Activated B cell treated with CpG ODN at 0.5 μM for 24 hours (primary cell): ENCODE measurements at regions of chr18 and their contacts with region 1.

Region 1: DNA sequence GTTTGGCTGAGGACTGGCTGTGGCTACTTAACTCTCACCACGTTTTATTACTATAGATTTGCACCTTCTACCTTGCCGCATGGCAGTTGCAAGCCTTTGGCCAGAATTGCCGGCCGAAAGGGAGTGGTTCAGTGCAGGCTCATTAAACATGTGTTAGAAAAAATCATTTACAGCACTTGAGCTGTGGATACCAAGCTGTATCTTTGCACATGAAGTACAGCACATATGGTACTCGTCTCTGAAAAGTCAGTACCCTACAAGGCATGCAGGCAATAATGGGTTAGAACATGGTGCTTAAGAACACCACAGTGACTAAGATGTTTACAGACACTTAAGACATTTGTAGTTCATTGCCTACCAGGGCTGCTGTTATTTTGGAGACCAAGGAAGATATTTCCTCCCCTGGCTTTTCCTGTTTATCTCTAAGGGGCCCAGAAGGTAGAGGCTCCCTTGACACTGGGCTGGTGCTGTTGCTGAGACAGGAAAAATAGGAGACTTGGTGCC is 103.1 kb downstream of the ZNF532 start:
- DNase-seq: no peak
- ATAC-seq: no peak
- H3K4me3 Mint-ChIP-seq: peak overlapping the region; percentile 46
- H3K27ac Mint-ChIP-seq: peak overlapping the region; percentile 94
- H3K4me1 Mint-ChIP-seq: peaks cover 94% of the 10 kb centered on the region
- H3K27me3 Mint-ChIP-seq: no peaks in the 10 kb centered on the region
- CTCF ChIP-seq: no peak

Region 2: DNA sequence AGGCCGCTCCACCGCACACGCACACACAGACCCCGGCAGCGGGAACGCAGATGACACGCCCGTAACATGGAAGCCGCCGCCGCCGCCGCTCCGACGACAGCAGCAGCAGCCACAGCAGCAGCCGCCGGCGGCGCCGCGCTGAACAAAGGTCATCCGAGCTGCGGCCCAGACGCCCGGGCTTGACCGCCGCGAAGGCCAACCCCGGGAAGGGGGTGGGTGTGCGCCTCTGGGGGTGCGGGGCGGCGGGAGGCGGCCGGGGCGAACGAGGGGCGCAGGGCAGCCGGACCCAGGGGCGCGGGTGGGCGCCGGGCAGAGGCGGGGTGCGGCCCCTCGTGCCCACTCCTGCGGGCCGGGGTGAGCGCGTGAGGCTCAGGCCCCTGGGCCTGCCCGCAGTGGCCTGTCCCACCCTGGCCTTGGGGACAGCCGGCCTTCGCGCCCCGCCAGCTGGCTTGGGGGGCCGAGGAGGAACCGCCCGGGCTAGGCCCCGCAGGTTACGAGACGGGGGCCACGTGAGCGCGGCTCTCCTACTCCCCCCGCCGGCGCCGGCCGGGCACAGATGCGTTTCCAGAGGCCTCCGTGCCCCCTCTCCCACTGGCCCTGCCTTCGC is 104.2 kb before region 1 on chr18:
- CTCF ChIA-PET with region 1: no interaction called
- POLR2A ChIA-PET with region 1: interaction called, 6 read pairs
- intact Hi-C with region 1: loop called (anchors 2 kb)
- DNase-seq: peak; percentile 61
- ATAC-seq: peak; percentile 66
- H3K4me3 Mint-ChIP-seq: peak overlapping the region; percentile 76
- H3K27ac Mint-ChIP-seq: peak overlapping the region; percentile 85
- H3K4me1 Mint-ChIP-seq: peaks cover 32% of the 10 kb centered on the region
- H3K27me3 Mint-ChIP-seq: no peaks in the 10 kb centered on the region
- CTCF ChIP-seq: no peak

Region 3: DNA sequence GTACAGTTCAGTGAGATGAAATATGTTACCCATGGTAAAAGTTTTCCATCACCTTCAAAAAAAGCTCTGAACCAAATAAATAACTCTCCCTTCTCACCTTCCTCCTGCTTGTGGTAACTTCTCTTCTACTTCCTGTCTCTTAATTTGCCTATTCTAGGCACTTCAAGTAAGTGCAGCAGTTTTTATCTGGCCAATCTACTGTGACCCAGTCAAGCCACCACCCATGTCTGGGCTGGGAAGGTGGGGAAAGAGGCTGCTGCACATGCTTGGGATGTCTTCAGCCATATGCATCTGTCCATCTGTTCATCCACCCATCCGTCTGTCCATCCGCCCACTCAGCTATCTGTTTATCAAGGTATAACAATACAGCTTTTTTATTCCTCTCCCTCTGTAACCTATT is 71.5 kb before region 1 on chr18:
- CTCF ChIA-PET with region 1: no interaction called
- POLR2A ChIA-PET with region 1: interaction called, 13 read pairs
- intact Hi-C with region 1: loop called (anchors 1 kb)
- DNase-seq: no peak
- ATAC-seq: peak; percentile 92
- H3K4me3 Mint-ChIP-seq: peak overlapping the region; percentile 80
- H3K27ac Mint-ChIP-seq: peak overlapping the region; percentile 81
- H3K4me1 Mint-ChIP-seq: peaks cover 82% of the 10 kb centered on the region
- H3K27me3 Mint-ChIP-seq: no peaks in the 10 kb centered on the region
- CTCF ChIP-seq: no peak

Region 4: GRCh38 chr18:58947136-58947732 is 20.6 kb before region 1 on chr18:
- CTCF ChIA-PET with region 1: no interaction called
- POLR2A ChIA-PET with region 1: interaction called, 16 read pairs
- intact Hi-C with region 1: loop called (anchors 1 kb)
- DNase-seq: no peak
- ATAC-seq: no peak
- H3K4me3 Mint-ChIP-seq: no peak overlapping the region
- H3K27ac Mint-ChIP-seq: peak overlapping the region; percentile 93
- H3K4me1 Mint-ChIP-seq: peaks cover 54% of the 10 kb centered on the region
- H3K27me3 Mint-ChIP-seq: no peaks in the 10 kb centered on the region
- CTCF ChIP-seq: no peak

Region 5: GRCh38 chr18:58991167-58991798 is 23.5 kb after region 1 on chr18:
- CTCF ChIA-PET with region 1: no interaction called
- POLR2A ChIA-PET with region 1: interaction called, 4 read pairs
- intact Hi-C with region 1: loop called (anchors 2 kb)
- DNase-seq: no peak
- ATAC-seq: peak; percentile 79
- H3K4me3 Mint-ChIP-seq: peak overlapping the region; percentile 20
- H3K27ac Mint-ChIP-seq: peak overlapping the region; percentile 69
- H3K4me1 Mint-ChIP-seq: peaks cover 34% of the 10 kb centered on the region
- H3K27me3 Mint-ChIP-seq: no peaks in the 10 kb centered on the region
- CTCF ChIP-seq: no peak

Region 6: DNA sequence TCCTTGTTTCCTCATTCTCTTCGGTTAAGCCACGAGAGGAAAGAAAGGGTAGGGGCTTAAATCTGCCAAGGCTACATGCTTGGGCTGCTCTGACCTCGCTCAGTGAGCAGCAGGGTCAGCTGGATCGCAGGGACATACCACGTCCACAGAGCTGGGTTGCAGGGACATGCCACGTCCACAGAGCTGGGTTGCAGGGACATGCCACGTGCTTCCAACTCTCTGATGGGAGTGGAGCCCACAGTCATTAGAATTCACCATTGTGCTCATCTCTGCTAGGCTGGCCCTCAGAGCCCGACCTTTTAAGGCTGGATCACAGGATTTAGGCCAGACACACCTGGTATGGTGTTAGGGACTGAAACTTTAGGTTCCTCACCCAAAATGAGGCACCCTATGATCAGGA is 64.5 kb after region 1 on chr18:
- CTCF ChIA-PET with region 1: no interaction called
- POLR2A ChIA-PET with region 1: interaction called, 10 read pairs
- intact Hi-C with region 1: no loop called
- DNase-seq: no peak
- ATAC-seq: no peak
- H3K4me3 Mint-ChIP-seq: no peak overlapping the region
- H3K27ac Mint-ChIP-seq: no peak overlapping the region
- H3K4me1 Mint-ChIP-seq: peaks cover 3% of the 10 kb centered on the region
- H3K27me3 Mint-ChIP-seq: no peaks in the 10 kb centered on the region
- CTCF ChIP-seq: no peak

Region 7: GRCh38 chr18:59139371-59140298 is 171.8 kb after region 1 on chr18 and contains the start of gene SEC11C:
- CTCF ChIA-PET with region 1: no interaction called
- POLR2A ChIA-PET with region 1: interaction called, 3 read pairs
- intact Hi-C with region 1: loop called (anchors 2 kb)
- DNase-seq: peak; percentile 93
- ATAC-seq: peak; percentile 84
- H3K4me3 Mint-ChIP-seq: peak within 1 kb of the TSS; percentile 95
- H3K27ac Mint-ChIP-seq: peak within 1 kb of the TSS; percentile 100
- H3K4me1 Mint-ChIP-seq: peaks cover 44% of the 10 kb centered on the region
- H3K27me3 Mint-ChIP-seq: peaks cover 8% of the 10 kb centered on the region
- CTCF ChIP-seq: no peak
- total RNA-seq, gene SEC11C: 112 and 126 TPM in 2 replicates